GM12878 (cell line): ENCODE measurements at regions of chr4 and their contacts with region 1.

Region 1: DNA sequence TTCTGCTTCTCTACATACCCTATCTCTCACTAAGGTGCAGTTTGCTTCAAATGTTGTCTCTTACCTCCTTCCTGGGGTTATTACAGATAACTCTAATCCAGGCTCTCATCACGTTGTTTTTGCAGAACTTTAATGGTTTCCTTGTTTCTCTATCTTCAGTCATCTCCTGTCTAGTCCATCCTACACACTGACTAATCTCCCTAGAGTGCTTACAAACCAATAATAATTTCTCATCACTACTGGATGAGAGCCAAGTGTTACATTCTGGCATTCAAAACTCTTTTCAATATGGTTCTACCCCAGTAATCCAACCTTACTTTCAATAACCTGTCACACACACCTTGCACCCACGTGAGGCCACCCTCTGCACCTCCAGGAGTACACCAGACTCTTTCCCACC is 86.1 kb downstream of the SYNPO2 start:
- DNase-seq: no peak
- ATAC-seq: no peak
- H3K4me3 ChIP-seq: no peak overlapping the region
- H3K27ac ChIP-seq: no peak overlapping the region
- H3K4me1 ChIP-seq: no peaks in the 10 kb centered on the region
- H3K27me3 ChIP-seq: no peaks in the 10 kb centered on the region
- CTCF ChIP-seq: no peak
- EP300 ChIP-seq: no peak
- POLR2A ChIP-seq: no peak
- RAD21 ChIP-seq: no peak

Region 2: GRCh38 chr4:118962540-118962939 is 12.2 kb before region 1 on chr4:
- CTCF ChIA-PET with region 1: interaction called, 10 read pairs
- POLR2A ChIA-PET with region 1: no interaction called
- RAD21 ChIA-PET with region 1: no interaction called
- SMC1A ChIA-PET with region 1: interaction called, 4 read pairs
- in situ Hi-C with region 1: no loop called
- intact Hi-C with region 1: no loop called
- DNase-seq: no peak
- ATAC-seq: no peak
- H3K4me3 ChIP-seq: no peak overlapping the region
- H3K27ac ChIP-seq: no peak overlapping the region
- H3K4me1 ChIP-seq: 0 out of 2 replicates have a peak, but pooled peaks cover 4% of the 10 kb centered on the region
- H3K27me3 ChIP-seq: no peaks in the 10 kb centered on the region
- CTCF ChIP-seq: no peak
- EP300 ChIP-seq: no peak
- POLR2A ChIP-seq: no peak
- RAD21 ChIP-seq: no peak